WTC11 (cell line): ENCODE measurements at regions of chr7 and their contacts with region 1.

Region 1: DNA sequence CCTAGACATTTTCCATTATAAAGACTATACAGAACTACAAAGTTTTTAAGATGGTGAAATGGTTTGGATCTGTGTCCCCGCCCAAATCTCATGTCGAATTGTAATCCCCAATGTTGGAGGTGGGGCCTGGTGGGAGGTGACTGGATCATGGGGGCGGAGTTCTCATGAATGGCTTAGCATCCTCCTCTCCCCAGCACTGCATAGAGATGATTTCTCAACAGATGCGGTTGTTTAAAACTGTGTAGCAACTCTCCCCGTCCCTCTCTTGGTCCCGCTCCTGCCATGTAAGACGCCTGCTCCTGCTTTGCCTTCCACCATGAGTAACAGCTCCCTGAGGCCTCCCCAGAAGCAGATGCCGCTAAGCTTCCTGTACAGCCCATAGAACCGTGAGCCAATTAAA is 1.6 kb downstream of the FAM133B start:
- DNase-seq: peak; percentile 25
- ATAC-seq: 0 out of 2 replicates have a peak, but pooled peaks have one; percentile 1
- H3K4me3 Mint-ChIP-seq: peak overlapping the region; percentile 92
- H3K27ac Mint-ChIP-seq: no peak overlapping the region
- H3K4me1 Mint-ChIP-seq: peaks cover 18% of the 10 kb centered on the region
- H3K27me3 Mint-ChIP-seq: peaks cover 25% of the 10 kb centered on the region
- CTCF ChIP-seq: no peak

Region 2: DNA sequence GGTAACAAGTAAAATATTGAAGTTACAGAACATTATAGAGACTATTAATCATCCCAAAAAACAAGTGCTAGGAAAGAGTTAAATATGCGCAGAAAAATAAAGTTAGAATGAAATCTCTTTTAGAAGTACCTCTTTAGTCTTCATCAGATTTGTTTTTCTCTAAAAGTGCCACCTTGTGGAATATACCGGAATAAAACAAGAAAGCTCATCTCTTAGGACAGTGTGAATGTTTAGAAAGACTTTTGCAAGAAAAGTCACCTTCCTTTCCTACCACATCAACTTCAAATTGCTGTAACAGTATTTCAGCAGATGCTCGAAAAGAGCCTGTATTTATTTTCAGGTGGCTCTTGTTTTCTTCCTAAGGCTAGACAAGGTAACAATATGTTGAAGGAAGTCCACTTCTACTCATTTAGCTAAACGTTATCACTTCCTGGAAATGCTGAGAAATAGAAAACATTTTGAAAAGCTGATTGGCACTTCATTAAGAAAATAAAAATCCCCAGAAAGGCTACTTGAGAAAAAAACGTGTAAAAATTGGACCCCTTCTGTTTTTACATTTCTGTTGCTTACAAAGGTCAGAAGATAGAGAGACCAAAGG is 21.5 kb after region 1 on chr7:
- CTCF ChIA-PET with region 1: interaction called, 22 read pairs
- POLR2A ChIA-PET with region 1: interaction called, 3 read pairs
- DNase-seq: no peak
- ATAC-seq: peak; percentile 29
- H3K4me3 Mint-ChIP-seq: no peak overlapping the region; the same call in 1 of the 2 replicates
- H3K27ac Mint-ChIP-seq: no peak overlapping the region
- H3K4me1 Mint-ChIP-seq: peaks cover 17% of the 10 kb centered on the region
- H3K27me3 Mint-ChIP-seq: no peaks in the 10 kb centered on the region; the same call in 1 of the 2 replicates
- CTCF ChIP-seq: no peak